ENCODE measurements at regions of chr2 and their contacts with region 1.

Region 1: GRCh38 chr2:131093006-131093695 is at the start of gene FAM168B:
- DNase-seq: peak; percentile 77 to 97 (median 88)
- ATAC-seq: peak; percentile 84
- H3K4me3 ChIP-seq: peak within 1 kb of the TSS; percentile 82
- H3K4me3 Mint-ChIP-seq: peak within 1 kb of the TSS; percentile 92
- H3K27ac ChIP-seq: peak within 1 kb of the TSS; percentile 79 to 90
- H3K27ac Mint-ChIP-seq: peak within 1 kb of the TSS; percentile 93
- H3K4me1 ChIP-seq: peaks cover 26% of the 10 kb centered on the region
- H3K4me1 Mint-ChIP-seq: peaks cover 32% of the 10 kb centered on the region
- H3K27me3 ChIP-seq: no peaks in the 10 kb centered on the region
- H3K27me3 Mint-ChIP-seq: no peaks in the 10 kb centered on the region
- CTCF ChIP-seq: no peak
- total RNA-seq, gene FAM168B: 74.1 to 76.4 TPM

Region 2: DNA sequence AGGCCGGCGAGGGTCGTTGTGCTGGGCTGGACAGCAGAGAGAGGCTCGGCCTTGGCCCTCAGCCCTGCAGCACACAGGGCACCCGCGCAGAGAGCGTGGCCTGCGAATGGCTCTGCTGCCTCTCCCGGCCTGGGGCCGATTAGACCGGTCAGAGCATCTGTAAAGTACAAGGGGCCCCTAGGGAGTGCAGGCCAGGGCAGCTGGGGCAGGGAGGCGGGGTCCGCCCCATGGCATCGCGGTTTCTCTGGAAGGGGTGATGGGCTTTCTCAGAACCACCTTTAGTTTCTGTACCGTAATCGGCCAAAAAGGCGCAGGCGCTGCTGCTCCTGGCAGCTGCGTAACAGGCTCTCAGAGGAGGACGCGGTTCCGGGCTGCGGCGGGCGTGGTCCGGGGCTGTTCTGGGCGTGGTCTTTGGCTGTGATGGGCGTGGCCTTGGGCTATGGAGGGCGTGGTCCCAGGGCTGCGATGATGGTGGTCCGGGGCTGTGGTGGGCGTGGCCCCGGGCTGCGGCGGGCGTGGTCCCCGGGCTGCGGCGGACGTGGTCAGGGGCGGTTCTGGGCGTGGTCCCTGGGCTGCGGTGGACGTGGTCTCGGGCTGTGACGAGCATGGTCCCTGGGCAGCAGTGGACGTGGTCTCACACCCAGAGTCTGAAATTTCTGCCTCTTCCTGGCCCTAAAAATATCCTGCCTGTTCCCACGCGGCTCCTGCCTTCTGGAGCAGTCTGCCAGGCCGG is 365.7 kb before region 1 on chr2:
- CTCF ChIA-PET with region 1: no interaction called
- POLR2A ChIA-PET with region 1: interaction called, 8 read pairs
- intact Hi-C with region 1: loop called in 1 of 2 experiments (anchors 5 kb)
- DNase-seq: peak; percentile 77 to 94 (median 87)
- ATAC-seq: peak; percentile 91
- H3K4me3 ChIP-seq: peak overlapping the region; percentile 84
- H3K4me3 Mint-ChIP-seq: peak overlapping the region; percentile 88
- H3K27ac ChIP-seq: peak overlapping the region; percentile 62 to 89
- H3K27ac Mint-ChIP-seq: peak overlapping the region; percentile 90
- H3K4me1 ChIP-seq: peaks cover 34% of the 10 kb centered on the region
- H3K4me1 Mint-ChIP-seq: no peaks in the 10 kb centered on the region
- H3K27me3 ChIP-seq: no peaks in the 10 kb centered on the region
- H3K27me3 Mint-ChIP-seq: peaks cover 5% of the 10 kb centered on the region
- CTCF ChIP-seq: no peak

Region 3: GRCh38 chr2:131040661-131041401 is 52.3 kb before region 1 on chr2:
- CTCF ChIA-PET with region 1: no interaction called
- POLR2A ChIA-PET with region 1: interaction called, 32 read pairs
- intact Hi-C with region 1: no loop called
- DNase-seq: peak in 4 of 14 experiments; percentile 15 to 43 (median 31)
- ATAC-seq: peak; percentile 45
- H3K4me3 ChIP-seq: peak overlapping the region; percentile 55
- H3K4me3 Mint-ChIP-seq: peak overlapping the region; percentile 94
- H3K27ac ChIP-seq: peak overlapping the region in 1 of 2 donors; percentile 9
- H3K27ac Mint-ChIP-seq: peak overlapping the region; percentile 79
- H3K4me1 ChIP-seq: peaks cover 37% of the 10 kb centered on the region
- H3K4me1 Mint-ChIP-seq: peaks cover 33% of the 10 kb centered on the region
- H3K27me3 ChIP-seq: peaks cover 2 to 3% of the 10 kb centered on the region in 2 experiments
- H3K27me3 Mint-ChIP-seq: peaks cover 11% of the 10 kb centered on the region
- CTCF ChIP-seq: peak; percentile 25

Region 4: GRCh38 chr2:131145040-131145439 is 51.9 kb after region 1 on chr2:
- CTCF ChIA-PET with region 1: no interaction called
- POLR2A ChIA-PET with region 1: no interaction called
- intact Hi-C with region 1: no loop called
- DNase-seq: no peak
- ATAC-seq: no peak
- H3K4me3 ChIP-seq: no peak overlapping the region
- H3K4me3 Mint-ChIP-seq: no peak overlapping the region
- H3K27ac ChIP-seq: no peak overlapping the region
- H3K27ac Mint-ChIP-seq: no peak overlapping the region
- H3K4me1 ChIP-seq: no peaks in the 10 kb centered on the region
- H3K4me1 Mint-ChIP-seq: peaks cover 8% of the 10 kb centered on the region
- H3K27me3 ChIP-seq: no peaks in the 10 kb centered on the region
- H3K27me3 Mint-ChIP-seq: no peaks in the 10 kb centered on the region
- CTCF ChIP-seq: no peak